Astrocyte of the cerebellum (primary cell): ENCODE measurements at regions of chr7 and their contacts with region 1.

Region 1: DNA sequence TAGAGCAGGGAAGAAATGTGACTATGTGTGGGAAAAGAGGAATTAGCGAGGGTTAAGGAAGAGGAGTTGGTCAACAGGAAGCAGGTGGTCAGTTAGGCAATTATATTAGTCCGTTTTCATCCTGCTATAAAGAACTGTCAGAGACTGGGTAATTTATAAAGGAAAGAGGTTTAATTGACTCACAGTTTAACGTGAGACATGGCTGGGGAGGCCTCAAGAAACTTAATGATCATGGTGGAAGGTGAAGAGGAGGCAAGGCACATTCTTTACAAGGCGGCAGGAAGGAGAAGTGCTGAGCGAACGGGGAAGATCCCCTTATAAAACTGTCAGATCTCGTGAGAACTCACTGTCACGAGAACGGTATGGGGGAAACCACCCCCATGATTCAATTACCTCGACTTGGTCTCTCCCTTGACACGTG is 35.0 kb downstream of the RAMP3 start:
- DNase-seq: no peak
- H3K4me3 ChIP-seq: no peak overlapping the region
- CTCF ChIP-seq: no peak

Region 2: GRCh38 chr7:44827567-44827966 is 365.1 kb before region 1 on chr7:
- in situ Hi-C with region 1: no loop called
- DNase-seq: no peak
- H3K4me3 ChIP-seq: no peak overlapping the region
- CTCF ChIP-seq: no peak

Region 3: DNA sequence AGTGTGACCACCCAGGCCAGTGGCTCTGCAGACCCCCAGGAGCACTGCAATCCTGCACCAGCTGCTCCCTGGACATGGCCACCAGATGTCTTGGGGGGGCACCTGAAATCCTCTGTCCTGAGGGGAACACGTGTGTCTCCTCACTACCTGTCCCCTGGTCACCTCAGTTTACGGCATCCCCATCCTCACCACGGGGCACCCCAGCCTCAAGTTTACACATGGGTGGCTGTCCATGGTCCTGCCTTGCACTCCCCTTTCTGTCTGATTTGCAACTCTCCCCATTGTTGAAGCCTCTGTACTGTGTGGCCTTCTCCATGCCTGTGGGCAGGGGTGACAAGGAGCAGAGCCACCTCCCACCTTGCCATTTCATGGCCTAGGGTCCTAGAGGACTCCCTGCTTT is 32.2 kb after region 1 on chr7:
- in situ Hi-C with region 1: loop called (anchors 5 kb)
- DNase-seq: no peak
- H3K4me3 ChIP-seq: no peak overlapping the region
- CTCF ChIP-seq: no peak

Region 4: DNA sequence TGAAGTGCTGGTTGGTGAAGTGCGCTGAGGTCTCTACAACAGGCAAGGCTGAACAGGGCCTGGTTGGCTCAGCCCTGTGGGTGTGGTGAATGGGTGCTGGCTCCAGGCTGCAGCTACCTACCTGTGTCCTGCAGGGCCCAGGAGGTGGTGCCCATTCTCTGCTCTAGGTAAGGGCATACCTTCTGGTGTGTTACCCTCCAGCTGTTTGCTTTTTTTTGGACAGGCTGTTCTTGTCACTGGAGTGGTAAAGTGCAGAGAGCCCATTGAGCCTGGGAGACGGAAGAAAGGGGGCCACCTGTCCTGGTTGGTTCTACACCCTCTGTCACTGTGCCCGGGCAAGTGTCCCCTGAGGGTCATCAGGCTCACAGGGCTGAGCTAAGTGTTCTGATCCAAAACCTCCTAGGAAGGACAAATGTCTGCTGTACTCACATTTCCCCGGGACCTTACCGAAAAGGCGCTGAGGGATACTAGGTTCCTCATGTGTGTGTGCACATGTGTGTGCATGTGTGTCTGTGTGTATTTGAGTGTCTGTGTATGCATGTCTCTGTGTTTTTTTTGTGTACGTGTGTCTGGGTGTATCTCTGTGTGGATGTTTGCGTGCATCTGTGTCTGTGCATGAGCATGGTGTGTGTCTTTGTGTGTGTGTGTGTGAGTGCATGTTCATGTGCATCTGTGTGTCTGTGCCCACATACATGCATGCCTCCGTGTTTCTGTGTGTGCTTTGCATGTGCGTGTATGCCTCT is 50.4 kb after region 1 on chr7:
- in situ Hi-C with region 1: no loop called
- DNase-seq: no peak
- H3K4me3 ChIP-seq: no peak overlapping the region
- CTCF ChIP-seq: no peak